IMR-90 (cell line): ENCODE measurements at regions of chr12 and their contacts with region 1.

Region 1: GRCh38 chr12:101773650-101774162 is 34.4 kb upstream of the SYCP3 start:
- DNase-seq: peak; percentile 75
- ATAC-seq: peak; percentile 98
- H3K4me3 ChIP-seq: no peak overlapping the region
- H3K27ac ChIP-seq: no peak overlapping the region
- H3K4me1 ChIP-seq: peaks cover 2% of the 10 kb centered on the region; the same call in 1 of the 2 replicates
- H3K27me3 ChIP-seq: no peaks in the 10 kb centered on the region
- CTCF ChIP-seq: peak; percentile 97
- POLR2A ChIP-seq: no peak
- RAD21 ChIP-seq: peak; percentile 93

Region 2: GRCh38 chr12:101830367-101831325 is 56.9 kb after region 1 on chr12 and contains the start of gene GNPTAB:
- CTCF ChIA-PET with region 1: interaction called, 18 read pairs
- POLR2A ChIA-PET with region 1: interaction called, 4 read pairs
- dilution Hi-C with region 1: no loop called
- in situ Hi-C with region 1: loop called (anchors 5 kb)
- intact Hi-C with region 1: loop called (anchors 1 kb)
- DNase-seq: peak; percentile 88
- ATAC-seq: peak; percentile 99
- H3K4me3 ChIP-seq: peak within 1 kb of the TSS; percentile 97
- H3K27ac ChIP-seq: peak within 1 kb of the TSS; percentile 56
- H3K4me1 ChIP-seq: no peaks in the 10 kb centered on the region
- H3K27me3 ChIP-seq: no peaks in the 10 kb centered on the region
- CTCF ChIP-seq: peak; percentile 94
- POLR2A ChIP-seq: peak; percentile 41; the same call in 1 of the 2 replicates
- RAD21 ChIP-seq: peak; percentile 63
- total RNA-seq, gene GNPTAB: 24.2 and 28.9 TPM in 2 replicates

Region 3: GRCh38 chr12:101839324-101840283 is 65.9 kb after region 1 on chr12:
- CTCF ChIA-PET with region 1: interaction called, 5 read pairs
- POLR2A ChIA-PET with region 1: no interaction called
- dilution Hi-C with region 1: no loop called
- in situ Hi-C with region 1: no loop called
- intact Hi-C with region 1: loop called (anchors 1 kb)
- DNase-seq: peak; percentile 68
- ATAC-seq: peak; percentile 92
- H3K4me3 ChIP-seq: no peak overlapping the region
- H3K27ac ChIP-seq: no peak overlapping the region
- H3K4me1 ChIP-seq: no peaks in the 10 kb centered on the region
- H3K27me3 ChIP-seq: no peaks in the 10 kb centered on the region
- CTCF ChIP-seq: peak; percentile 75
- POLR2A ChIP-seq: no peak
- RAD21 ChIP-seq: peak; percentile 74

Region 4: DNA sequence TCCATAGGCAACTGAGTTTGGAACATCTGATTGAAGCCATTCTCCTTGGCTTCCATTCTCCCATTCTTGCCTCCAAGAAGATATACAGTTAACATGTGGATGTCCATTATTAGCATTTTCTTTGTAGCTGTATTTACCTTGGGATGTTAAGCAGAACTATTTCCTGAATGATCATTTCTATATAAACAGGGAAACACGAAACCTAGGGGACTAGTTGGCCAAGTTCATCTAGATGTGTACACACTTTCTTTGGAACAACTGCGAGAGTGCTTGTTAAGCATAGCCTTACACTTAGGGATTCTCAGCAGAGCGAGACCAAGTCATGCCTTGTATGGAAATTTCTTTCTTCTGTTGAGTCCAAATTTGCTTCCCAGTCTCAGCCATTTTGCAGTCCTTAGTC is 145.7 kb after region 1 on chr12:
- CTCF ChIA-PET with region 1: no interaction called
- POLR2A ChIA-PET with region 1: no interaction called
- dilution Hi-C with region 1: no loop called
- in situ Hi-C with region 1: no loop called
- intact Hi-C with region 1: loop called (anchors 5 kb)
- DNase-seq: peak; percentile 51
- ATAC-seq: no peak
- H3K4me3 ChIP-seq: no peak overlapping the region
- H3K27ac ChIP-seq: peak overlapping the region; percentile 83; the same call in 1 of the 2 replicates
- H3K4me1 ChIP-seq: peaks cover 12% of the 10 kb centered on the region
- H3K27me3 ChIP-seq: no peaks in the 10 kb centered on the region
- CTCF ChIP-seq: no peak
- POLR2A ChIP-seq: no peak
- RAD21 ChIP-seq: no peak

Region 5: GRCh38 chr12:102095675-102096263 is 322.1 kb after region 1 on chr12:
- CTCF ChIA-PET with region 1: no interaction called
- POLR2A ChIA-PET with region 1: no interaction called
- dilution Hi-C with region 1: no loop called
- in situ Hi-C with region 1: no loop called
- intact Hi-C with region 1: loop called (anchors 10 kb)
- DNase-seq: peak; percentile 61
- ATAC-seq: peak; percentile 88
- H3K4me3 ChIP-seq: no peak overlapping the region
- H3K27ac ChIP-seq: no peak overlapping the region
- H3K4me1 ChIP-seq: peaks cover 3% of the 10 kb centered on the region; the same call in 1 of the 2 replicates
- H3K27me3 ChIP-seq: no peaks in the 10 kb centered on the region
- CTCF ChIP-seq: peak; percentile 57
- POLR2A ChIP-seq: no peak
- RAD21 ChIP-seq: peak; percentile 54

Region 6: GRCh38 chr12:102769319-102769916 is 995.7 kb after region 1 on chr12:
- CTCF ChIA-PET with region 1: no interaction called
- POLR2A ChIA-PET with region 1: no interaction called
- dilution Hi-C with region 1: no loop called
- in situ Hi-C with region 1: no loop called
- intact Hi-C with region 1: loop called (anchors 10 kb)
- DNase-seq: peak; percentile 58
- ATAC-seq: peak; percentile 95
- H3K4me3 ChIP-seq: no peak overlapping the region
- H3K27ac ChIP-seq: no peak overlapping the region
- H3K4me1 ChIP-seq: no peaks in the 10 kb centered on the region
- H3K27me3 ChIP-seq: no peaks in the 10 kb centered on the region; the same call in 1 of the 2 replicates
- CTCF ChIP-seq: peak; percentile 73
- POLR2A ChIP-seq: no peak
- RAD21 ChIP-seq: peak; percentile 73